ENCODE measurements at regions of chr2 and their contacts with region 1.

Region 1: DNA sequence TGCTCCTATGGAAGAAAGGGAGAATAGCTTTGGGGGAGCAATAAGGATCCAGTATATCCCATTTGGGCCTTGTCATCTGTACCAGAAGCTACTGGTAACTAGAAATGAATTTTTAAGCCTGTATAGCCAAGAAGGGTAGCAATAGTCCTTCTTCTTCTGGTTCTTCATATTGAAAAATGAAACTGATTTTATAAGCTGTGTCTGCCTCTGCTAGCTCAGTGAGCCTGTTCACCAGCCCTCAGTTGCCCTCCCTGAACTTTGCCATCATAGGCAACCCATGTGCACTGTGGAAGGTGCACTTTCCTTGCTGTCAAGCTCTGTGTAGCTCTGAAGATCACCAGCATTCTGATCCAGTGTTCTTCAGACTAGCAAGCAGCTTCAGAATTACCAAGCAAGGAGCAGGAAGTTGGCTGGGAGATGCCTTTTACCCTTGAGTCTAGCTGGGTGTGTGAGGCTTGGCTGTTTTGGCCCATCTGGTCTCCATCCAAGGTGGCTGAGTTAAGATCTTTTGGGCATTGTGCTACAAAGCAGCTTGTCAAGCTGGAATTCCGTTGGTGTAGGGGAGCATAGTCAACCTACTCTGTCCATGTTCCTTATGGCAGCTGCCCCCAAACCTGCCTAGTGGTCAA is 55.8 kb upstream of the MGAT5 start:
- DNase-seq: no peak
- H3K4me3 Mint-ChIP-seq: no peak overlapping the region
- H3K27ac Mint-ChIP-seq: peak overlapping the region; percentile 80
- H3K4me1 Mint-ChIP-seq: peaks cover 42% of the 10 kb centered on the region
- H3K27me3 Mint-ChIP-seq: no peaks in the 10 kb centered on the region

Region 2: GRCh38 chr2:134181210-134181609 is 16.9 kb before region 1 on chr2:
- CTCF ChIA-PET with region 1: interaction called, 12 read pairs
- POLR2A ChIA-PET with region 1: no interaction called
- DNase-seq: peak; percentile 73
- H3K4me3 Mint-ChIP-seq: peak overlapping the region; percentile 28
- H3K27ac Mint-ChIP-seq: peak overlapping the region; percentile 90
- H3K4me1 Mint-ChIP-seq: peaks cover 76% of the 10 kb centered on the region
- H3K27me3 Mint-ChIP-seq: no peaks in the 10 kb centered on the region